Upper lobe of right lung (tissue), 1 donor: ENCODE measurements at regions of chr3 and their contacts with region 1.

Region 1: GRCh38 chr3:185282696-185283394 is 29.0 kb upstream of the EHHADH start:
- DNase-seq: peak; percentile 98
- ATAC-seq: peak; percentile 100
- H3K4me3 ChIP-seq: peak overlapping the region; percentile 82
- H3K27ac ChIP-seq: peak overlapping the region; percentile 66
- H3K4me1 ChIP-seq: no peaks in the 10 kb centered on the region
- H3K27me3 ChIP-seq: no peaks in the 10 kb centered on the region
- CTCF ChIP-seq: no peak

Region 2: DNA sequence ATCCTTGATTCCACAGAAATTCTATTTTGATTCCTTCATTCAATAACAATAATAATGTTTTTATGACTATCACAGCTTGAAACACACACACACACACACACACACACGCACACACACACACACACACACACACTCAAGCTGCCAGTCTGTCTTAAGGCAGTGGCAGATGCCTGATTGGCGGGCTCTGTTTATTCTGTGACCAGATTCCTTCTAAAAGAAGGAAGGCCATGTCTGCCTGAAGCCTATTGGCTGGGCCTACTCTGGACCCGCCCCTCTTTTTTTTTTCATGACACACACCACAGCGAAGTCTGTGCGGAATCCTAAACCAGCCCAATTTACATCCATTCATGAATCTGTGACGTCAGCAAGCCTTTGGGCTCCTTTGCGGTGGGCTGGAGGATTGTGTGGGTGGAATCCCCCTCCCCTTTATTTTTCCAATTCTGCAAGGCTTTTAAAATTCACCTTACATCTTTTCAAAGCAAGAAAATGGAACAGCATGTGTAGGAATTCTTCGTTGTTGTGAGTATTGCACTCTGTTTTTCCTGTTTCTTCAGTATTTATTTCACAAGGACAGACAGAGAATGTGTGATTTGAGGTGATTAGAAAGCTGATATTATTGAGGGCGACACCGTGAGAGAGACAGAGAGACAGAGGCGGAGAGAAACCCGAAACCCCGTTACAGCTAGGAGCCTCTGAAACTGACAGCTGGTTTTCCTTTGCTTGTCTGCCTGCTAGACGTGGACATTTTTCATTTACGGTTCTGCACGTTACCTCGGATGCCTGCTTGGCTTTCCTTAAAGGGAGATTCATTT is 80.2 kb after region 1 on chr3 and contains the start of gene MAP3K13:
- intact Hi-C with region 1: loop called (anchors 5 kb)
- DNase-seq: peak; percentile 78
- ATAC-seq: peak; percentile 98
- H3K4me3 ChIP-seq: peak within 1 kb of the TSS; percentile 62
- H3K27ac ChIP-seq: peak within 1 kb of the TSS; percentile 82
- H3K4me1 ChIP-seq: peaks cover 2% of the 10 kb centered on the region
- H3K27me3 ChIP-seq: no peaks in the 10 kb centered on the region
- CTCF ChIP-seq: no peak
- total RNA-seq, gene MAP3K13: 37.6 TPM